Activated naive CD4-positive, alpha-beta T cell treated with anti-CD3 and anti-CD28 coated beads for 36 hours (primary cell): ENCODE measurements at regions of chr6 and their contacts with region 1.

Region 1: DNA sequence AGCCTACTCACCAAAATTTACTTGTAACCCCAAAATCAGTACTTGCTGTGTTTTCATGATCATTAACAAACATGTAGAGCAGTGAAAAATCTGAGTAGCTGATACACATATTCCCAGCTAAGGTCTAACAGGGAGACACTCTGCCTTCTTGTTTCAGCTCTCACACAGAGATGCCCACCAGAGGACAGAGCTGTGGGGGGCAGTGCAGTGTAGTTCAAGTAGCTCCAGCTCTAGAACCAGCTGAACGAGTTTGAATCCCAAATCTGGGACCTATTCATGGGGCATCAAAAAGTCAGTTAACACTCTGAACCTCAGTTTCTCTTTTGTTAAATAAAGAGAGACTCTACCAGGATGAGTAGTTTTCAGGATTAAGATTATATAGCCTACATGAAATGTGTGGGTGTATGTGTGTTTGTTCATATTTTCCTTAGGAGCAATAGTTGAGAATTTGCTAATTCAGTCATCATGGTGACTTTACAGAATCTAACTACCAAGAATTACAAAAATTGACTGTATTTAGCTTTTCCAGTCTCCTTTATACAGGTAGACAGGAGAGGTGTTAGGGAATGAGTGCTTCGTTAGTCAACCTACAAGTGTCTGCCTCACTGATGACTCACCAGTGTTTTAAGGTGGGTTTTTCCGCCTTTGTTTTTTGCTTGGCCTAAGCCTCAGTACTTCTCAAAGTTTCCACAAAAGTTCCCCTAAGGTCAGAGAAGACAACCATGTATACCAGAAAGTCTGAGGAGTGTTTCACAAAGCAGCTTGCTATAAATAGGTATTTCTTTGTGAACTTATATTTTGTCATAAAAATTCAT is 164.0 kb upstream of the RUNX2 start:
- DNase-seq: peak; percentile 72
- H3K4me3 Mint-ChIP-seq: peak overlapping the region; percentile 17
- H3K27ac Mint-ChIP-seq: peak overlapping the region; percentile 93
- H3K4me1 Mint-ChIP-seq: peaks cover 63% of the 10 kb centered on the region
- H3K27me3 Mint-ChIP-seq: no peaks in the 10 kb centered on the region

Region 2: GRCh38 chr6:44788387-44788981 is 375.7 kb before region 1 on chr6:
- CTCF ChIA-PET with region 1: no interaction called
- intact Hi-C with region 1: no loop called
- DNase-seq: no peak
- H3K4me3 Mint-ChIP-seq: no peak overlapping the region
- H3K27ac Mint-ChIP-seq: no peak overlapping the region
- H3K4me1 Mint-ChIP-seq: peaks cover 13% of the 10 kb centered on the region
- H3K27me3 Mint-ChIP-seq: no peaks in the 10 kb centered on the region

Region 3: DNA sequence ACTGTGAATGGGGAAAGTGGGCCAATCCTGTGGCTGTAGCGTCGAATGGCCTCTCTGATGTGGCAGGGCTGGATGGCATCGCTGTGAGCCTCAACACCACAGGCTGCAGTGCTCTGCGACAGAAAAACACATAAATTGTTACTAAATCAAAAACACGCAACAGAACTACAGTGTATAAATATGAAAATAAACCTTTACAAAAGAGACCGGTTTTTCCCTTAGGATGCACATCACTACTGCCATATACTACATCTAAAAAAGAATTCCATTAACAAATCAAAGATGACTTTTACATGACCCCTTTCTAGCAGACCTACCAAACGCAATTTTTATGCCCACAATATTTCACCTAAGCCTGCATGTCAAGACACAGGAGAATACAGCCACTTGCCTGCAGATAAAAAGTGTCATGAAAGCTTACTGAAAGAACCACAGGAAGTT is 231.5 kb before region 1 on chr6:
- CTCF ChIA-PET with region 1: no interaction called
- intact Hi-C with region 1: loop called (anchors 2 kb)
- DNase-seq: peak; percentile 51
- H3K4me3 Mint-ChIP-seq: peak overlapping the region; percentile 78
- H3K27ac Mint-ChIP-seq: peak overlapping the region; percentile 91
- H3K4me1 Mint-ChIP-seq: peaks cover 49% of the 10 kb centered on the region
- H3K27me3 Mint-ChIP-seq: no peaks in the 10 kb centered on the region

Region 4: DNA sequence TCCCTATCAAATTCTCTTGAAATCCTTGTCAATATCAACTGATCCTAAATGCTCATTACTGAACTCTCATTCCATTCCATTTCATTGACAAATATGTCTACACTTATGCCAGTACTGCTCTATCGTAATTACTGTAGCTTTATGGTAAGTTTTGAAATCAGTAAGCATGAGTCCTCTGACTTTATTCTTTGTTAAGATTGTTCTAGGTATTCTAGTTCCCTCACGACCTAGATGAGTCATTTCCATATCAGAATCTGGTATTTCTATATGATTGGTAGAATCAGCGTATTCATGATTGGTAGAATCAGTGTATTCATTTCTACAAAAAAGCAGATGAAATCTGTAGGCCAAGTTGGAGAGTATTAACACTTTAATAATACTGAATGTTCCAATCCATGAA is 154.6 kb before region 1 on chr6:
- CTCF ChIA-PET with region 1: no interaction called
- intact Hi-C with region 1: loop called (anchors 1 kb)
- DNase-seq: no peak
- H3K4me3 Mint-ChIP-seq: no peak overlapping the region
- H3K27ac Mint-ChIP-seq: no peak overlapping the region
- H3K4me1 Mint-ChIP-seq: peaks cover 12% of the 10 kb centered on the region
- H3K27me3 Mint-ChIP-seq: no peaks in the 10 kb centered on the region

Region 5: DNA sequence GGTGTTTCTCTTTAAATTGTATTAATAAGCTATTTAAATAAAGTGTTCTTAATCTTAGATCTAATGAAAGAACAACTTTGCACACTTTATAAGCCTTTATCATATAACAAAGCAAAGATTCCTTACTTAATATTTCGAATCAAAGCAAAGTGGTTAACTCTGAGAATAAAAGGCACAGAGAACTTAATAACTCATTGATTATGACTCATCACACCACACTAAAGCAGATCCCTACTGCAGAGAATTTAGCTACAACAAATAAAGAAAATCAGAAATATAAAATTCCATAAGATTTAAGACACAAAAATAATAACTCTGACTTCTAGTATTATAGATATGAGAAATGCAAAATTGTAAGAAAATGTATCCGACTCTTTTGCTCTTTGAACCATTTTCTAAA is 28.4 kb after region 1 on chr6:
- CTCF ChIA-PET with region 1: no interaction called
- intact Hi-C with region 1: no loop called
- DNase-seq: no peak
- H3K4me3 Mint-ChIP-seq: no peak overlapping the region
- H3K27ac Mint-ChIP-seq: no peak overlapping the region
- H3K4me1 Mint-ChIP-seq: peaks cover 33% of the 10 kb centered on the region
- H3K27me3 Mint-ChIP-seq: no peaks in the 10 kb centered on the region

Region 6: DNA sequence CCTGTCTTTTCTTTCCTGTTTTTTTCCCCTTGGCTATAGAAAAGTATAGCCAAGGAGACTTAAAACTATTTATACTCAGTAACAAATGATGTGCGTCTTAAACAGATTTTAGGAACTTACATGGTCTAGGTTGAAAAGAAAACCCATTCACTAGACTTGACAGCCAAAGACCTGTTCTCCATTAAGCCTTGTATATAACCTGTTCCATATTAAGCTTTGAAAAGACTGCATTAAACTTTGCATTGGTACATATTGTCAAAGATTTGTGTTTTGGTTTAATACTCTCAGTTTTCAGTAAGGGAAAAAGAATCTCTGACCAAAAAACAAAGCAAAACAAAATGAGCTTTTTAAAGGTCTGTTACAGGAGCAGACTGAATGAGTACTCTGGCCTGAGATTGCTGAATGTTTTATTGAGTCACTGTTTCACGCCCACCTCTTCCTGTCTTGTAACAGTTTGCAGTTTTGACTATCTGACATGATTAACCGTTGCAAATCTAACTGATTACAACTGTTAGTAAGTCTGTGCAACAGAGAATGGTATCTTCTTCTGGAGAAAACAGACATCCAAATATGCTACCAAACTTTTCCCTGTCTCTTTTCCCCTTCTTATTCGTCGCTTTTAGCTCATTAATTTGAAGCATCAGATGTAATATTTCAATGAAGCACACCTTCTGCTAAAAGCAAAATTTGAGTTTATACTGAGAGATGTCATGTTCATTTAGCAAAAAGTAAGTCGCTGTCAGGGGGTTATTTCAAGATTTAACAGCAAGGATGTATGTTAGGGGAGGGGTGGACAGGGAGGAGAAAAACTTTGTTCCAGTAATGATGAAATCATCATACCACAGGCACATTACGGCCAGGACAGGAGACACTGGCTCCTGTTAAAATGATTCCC is 272.6 kb after region 1 on chr6:
- CTCF ChIA-PET with region 1: no interaction called
- intact Hi-C with region 1: loop called (anchors 5 kb)
- DNase-seq: peak; percentile 77
- H3K4me3 Mint-ChIP-seq: peak overlapping the region; percentile 35
- H3K27ac Mint-ChIP-seq: peak overlapping the region; percentile 76
- H3K4me1 Mint-ChIP-seq: peaks cover 58% of the 10 kb centered on the region
- H3K27me3 Mint-ChIP-seq: no peaks in the 10 kb centered on the region

Region 7: GRCh38 chr6:45822246-45822812 is 658.2 kb after region 1 on chr6:
- CTCF ChIA-PET with region 1: no interaction called
- intact Hi-C with region 1: loop called (anchors 1 kb)
- DNase-seq: peak; percentile 59
- H3K4me3 Mint-ChIP-seq: peak overlapping the region; percentile 1
- H3K27ac Mint-ChIP-seq: peak overlapping the region; percentile 74
- H3K4me1 Mint-ChIP-seq: peaks cover 19% of the 10 kb centered on the region
- H3K27me3 Mint-ChIP-seq: peaks cover 4% of the 10 kb centered on the region